PC-9 (cell line): ENCODE measurements at regions of chr13 and their contacts with region 1.

Region 1: DNA sequence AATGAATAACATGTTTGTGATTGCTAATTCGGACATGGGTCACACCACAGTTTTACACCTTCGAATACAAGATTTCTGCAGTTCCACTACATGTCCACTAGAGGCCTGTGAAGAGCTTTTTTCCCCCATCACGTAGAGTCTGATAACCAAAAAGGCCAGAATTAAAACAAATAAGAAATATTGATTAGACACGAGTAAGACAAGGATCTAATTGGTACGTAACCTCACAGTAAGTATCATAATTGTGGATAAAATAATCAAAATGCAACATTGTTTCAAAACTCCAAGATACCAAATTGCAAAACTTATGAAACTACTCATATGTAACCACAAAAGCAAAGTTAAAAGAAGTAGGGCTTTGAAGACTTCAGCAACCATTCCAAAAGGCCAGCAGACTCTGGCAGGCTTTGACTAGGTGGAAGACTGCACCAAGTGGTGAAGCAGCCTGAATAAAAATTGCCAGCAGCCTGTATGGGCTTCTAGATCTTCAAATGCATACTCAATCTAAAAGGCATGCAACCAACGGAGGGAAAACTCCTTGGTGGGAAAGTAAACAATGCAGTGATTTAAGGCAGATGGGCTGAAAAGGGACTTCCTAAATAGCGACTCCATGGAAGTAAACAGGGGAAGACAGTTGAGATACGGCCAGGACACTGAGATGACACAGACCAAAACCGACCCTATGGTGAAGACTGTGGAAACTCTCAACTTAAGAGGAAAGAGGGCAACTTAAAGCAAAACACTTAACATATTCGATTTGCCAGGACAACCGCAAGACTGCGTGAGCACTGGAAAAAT is 56.7 kb downstream of the STARD13 start:
- DNase-seq: no peak
- H3K4me3 ChIP-seq: no peak overlapping the region
- H3K27ac ChIP-seq: no peak overlapping the region
- H3K4me1 ChIP-seq: peaks cover 10% of the 10 kb centered on the region; the same call in 1 of the 2 replicates
- H3K27me3 ChIP-seq: no peaks in the 10 kb centered on the region
- CTCF ChIP-seq: peak; percentile 98

Region 2: DNA sequence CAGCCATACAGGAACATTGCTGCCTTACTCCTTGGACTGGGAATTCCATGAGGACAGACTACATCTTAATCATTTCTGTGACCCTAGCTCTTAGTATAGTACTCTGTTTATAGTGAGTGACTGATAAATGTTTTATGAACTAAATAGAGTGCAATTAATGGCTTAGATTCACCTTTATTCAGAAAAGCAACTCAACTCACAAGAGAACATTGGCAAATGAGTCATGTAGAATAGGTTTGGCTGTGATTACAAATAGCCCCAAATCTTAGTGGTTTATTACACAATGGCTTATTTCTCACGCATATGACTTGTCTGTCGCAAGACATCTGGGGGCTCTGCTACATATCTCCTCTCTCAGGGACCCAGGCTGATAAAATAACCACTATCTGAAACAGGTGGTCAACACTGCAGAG is 334.3 kb before region 1 on chr13:
- CTCF ChIA-PET with region 1: no interaction called
- POLR2A ChIA-PET with region 1: no interaction called
- intact Hi-C with region 1: no loop called
- DNase-seq: peak in 1 of 2 experiments; percentile 84
- H3K4me3 ChIP-seq: no peak overlapping the region
- H3K27ac ChIP-seq: peak overlapping the region; percentile 59
- H3K4me1 ChIP-seq: peaks cover 31% of the 10 kb centered on the region
- H3K27me3 ChIP-seq: no peaks in the 10 kb centered on the region
- CTCF ChIP-seq: no peak

Region 3: GRCh38 chr13:33017323-33017929 is 211.4 kb before region 1 on chr13:
- CTCF ChIA-PET with region 1: no interaction called
- POLR2A ChIA-PET with region 1: interaction called, 3 read pairs
- intact Hi-C with region 1: loop called (anchors 10 kb)
- DNase-seq: peak in 1 of 2 experiments; percentile 17
- H3K4me3 ChIP-seq: no peak overlapping the region
- H3K27ac ChIP-seq: no peak overlapping the region
- H3K4me1 ChIP-seq: peaks cover 17% of the 10 kb centered on the region; the same call in 1 of the 2 replicates
- H3K27me3 ChIP-seq: no peaks in the 10 kb centered on the region
- CTCF ChIP-seq: no peak

Region 4: DNA sequence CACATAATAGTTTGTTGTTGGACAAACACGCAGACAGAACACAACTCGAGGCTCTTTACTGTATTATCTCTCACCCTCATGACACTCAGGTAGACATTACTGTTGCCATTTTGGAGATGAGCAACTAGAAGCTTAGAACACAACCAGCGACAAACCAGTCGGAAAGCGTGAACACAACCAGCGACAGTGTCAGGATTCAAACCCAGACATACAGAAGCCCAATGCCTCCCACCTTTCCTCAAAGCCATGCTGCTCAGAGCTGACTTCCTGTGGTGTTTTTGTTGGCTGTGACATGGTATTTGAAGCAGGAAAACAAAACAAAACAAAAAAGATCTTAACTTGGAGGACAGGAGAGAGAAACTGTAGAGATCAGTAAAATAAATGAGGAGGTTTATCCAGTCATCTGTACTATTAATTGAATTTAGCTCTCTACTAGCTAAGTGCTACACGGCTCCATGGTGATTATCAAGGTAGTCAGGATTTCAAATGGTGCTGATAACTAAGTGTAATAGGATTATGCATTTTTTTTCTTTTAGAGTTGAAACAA is 35.3 kb before region 1 on chr13:
- CTCF ChIA-PET with region 1: no interaction called
- POLR2A ChIA-PET with region 1: interaction called, 10 read pairs
- intact Hi-C with region 1: no loop called
- DNase-seq: no peak
- H3K4me3 ChIP-seq: no peak overlapping the region
- H3K27ac ChIP-seq: no peak overlapping the region
- H3K4me1 ChIP-seq: peaks cover 11% of the 10 kb centered on the region
- H3K27me3 ChIP-seq: no peaks in the 10 kb centered on the region
- CTCF ChIP-seq: no peak

Region 5: GRCh38 chr13:33441015-33441414 is 212.2 kb after region 1 on chr13:
- CTCF ChIA-PET with region 1: no interaction called
- POLR2A ChIA-PET with region 1: no interaction called
- intact Hi-C with region 1: loop called (anchors 10 kb)
- DNase-seq: peak in 1 of 2 experiments; percentile 7
- H3K4me3 ChIP-seq: no peak overlapping the region
- H3K27ac ChIP-seq: no peak overlapping the region
- H3K4me1 ChIP-seq: peaks cover 22% of the 10 kb centered on the region
- H3K27me3 ChIP-seq: no peaks in the 10 kb centered on the region
- CTCF ChIP-seq: peak; percentile 55; the same call in 1 of the 2 replicates

Region 6: GRCh38 chr13:33651813-33652212 is 423.0 kb after region 1 on chr13:
- CTCF ChIA-PET with region 1: no interaction called
- POLR2A ChIA-PET with region 1: no interaction called
- intact Hi-C with region 1: no loop called
- DNase-seq: no peak
- H3K4me3 ChIP-seq: no peak overlapping the region
- H3K27ac ChIP-seq: no peak overlapping the region
- H3K4me1 ChIP-seq: peaks cover 8% of the 10 kb centered on the region; the same call in 1 of the 2 replicates
- H3K27me3 ChIP-seq: no peaks in the 10 kb centered on the region
- CTCF ChIP-seq: no peak